Activated CD4-positive, alpha-beta T cell treated with anti-CD3 and anti-CD28 coated beads, Interleukin-2, amount 10 ng/mL, durations not matched to agents 24 days and 14 days (primary cell): ENCODE measurements at regions of chr7 and their contacts with region 1.

Region 1: GRCh38 chr7:140517546-140518369 is 38.5 kb upstream of the MKRN1 start:
- DNase-seq: peak; percentile 89
- H3K4me3 Mint-ChIP-seq: no peak overlapping the region
- H3K27ac Mint-ChIP-seq: no peak overlapping the region
- H3K4me1 Mint-ChIP-seq: peaks cover 2% of the 10 kb centered on the region
- H3K27me3 Mint-ChIP-seq: peaks cover 9% of the 10 kb centered on the region

Region 2: DNA sequence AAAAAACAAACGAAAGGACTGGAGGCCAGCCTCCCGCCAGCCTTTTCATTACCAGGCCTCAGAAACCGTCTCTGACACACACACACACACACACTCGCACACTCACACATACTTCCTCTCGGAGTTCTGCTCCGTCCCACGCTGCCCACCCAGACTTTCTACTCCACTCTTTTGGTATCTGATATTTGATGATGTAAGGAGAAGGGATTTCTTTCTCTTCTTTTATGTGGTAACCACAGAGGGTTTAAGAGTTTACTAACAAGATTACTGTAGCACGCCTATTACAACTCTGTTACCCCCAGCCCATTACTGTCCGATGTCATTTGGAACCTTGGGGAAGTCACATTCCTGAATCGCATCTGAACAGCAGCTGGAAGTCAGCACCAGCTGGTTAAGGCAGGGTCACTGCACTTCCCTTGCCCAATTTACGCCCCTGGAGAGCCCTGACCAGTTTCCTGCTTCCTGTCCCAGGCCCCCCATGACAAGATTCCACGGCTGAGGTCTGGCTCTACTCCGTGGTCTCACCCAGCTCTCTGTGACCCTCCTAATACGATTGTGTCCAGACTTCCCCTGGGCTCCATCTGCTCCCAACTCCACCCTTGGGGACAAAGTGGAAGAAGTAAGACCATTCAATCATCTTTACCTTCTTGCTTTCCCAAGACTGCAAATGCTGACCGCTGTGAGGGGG is 121.8 kb after region 1 on chr7:
- intact Hi-C with region 1: loop called (anchors 5 kb)
- DNase-seq: no peak
- H3K4me3 Mint-ChIP-seq: peak overlapping the region; percentile 83
- H3K27ac Mint-ChIP-seq: no peak overlapping the region
- H3K4me1 Mint-ChIP-seq: peaks cover 10% of the 10 kb centered on the region
- H3K27me3 Mint-ChIP-seq: peaks cover 71% of the 10 kb centered on the region

Region 3: DNA sequence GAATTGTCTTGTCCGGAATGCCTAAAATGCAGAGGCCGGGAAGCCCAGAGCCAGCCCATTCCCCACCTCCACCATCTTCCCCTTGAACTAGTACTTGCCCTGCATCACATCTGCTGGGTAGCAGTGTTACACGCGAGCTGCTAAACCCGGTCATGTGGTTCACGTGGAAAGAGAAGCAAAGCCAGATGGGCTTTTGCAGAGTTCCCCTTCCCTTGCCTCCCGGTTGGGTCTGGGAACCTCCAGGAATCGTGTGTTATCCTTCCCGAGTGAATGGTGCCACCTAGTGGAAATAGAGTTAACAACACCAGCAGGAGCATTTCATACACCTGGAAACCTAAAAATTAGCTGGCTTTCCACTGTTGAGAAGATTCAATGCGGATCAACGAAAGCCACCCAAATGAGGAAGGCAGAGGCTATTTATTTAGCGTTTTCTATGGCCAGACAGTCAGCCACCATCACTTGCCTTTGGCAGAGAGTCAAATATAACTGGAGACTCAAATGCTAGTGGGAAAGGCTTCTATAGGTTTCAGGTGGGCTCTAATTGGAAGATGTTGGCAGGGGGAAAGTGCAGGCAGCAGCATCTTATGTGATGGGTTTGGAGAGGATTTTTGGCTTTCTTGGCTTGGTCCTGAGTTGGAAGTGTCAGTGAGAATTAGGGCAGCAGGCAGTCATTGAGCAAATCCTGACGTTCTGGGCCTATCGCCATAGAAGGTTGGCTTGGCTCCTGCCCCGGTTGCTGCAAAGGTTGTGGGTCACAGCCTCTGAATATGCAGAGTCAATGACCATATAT is 135.8 kb after region 1 on chr7:
- intact Hi-C with region 1: loop called (anchors 1 kb)
- DNase-seq: peak; percentile 80
- H3K4me3 Mint-ChIP-seq: no peak overlapping the region
- H3K27ac Mint-ChIP-seq: no peak overlapping the region
- H3K4me1 Mint-ChIP-seq: peaks cover 19% of the 10 kb centered on the region
- H3K27me3 Mint-ChIP-seq: peaks cover 37% of the 10 kb centered on the region